Naive thymus-derived CD4-positive, alpha-beta T cell (primary cell): ENCODE measurements at regions of chr1 and their contacts with region 1.

Region 1: DNA sequence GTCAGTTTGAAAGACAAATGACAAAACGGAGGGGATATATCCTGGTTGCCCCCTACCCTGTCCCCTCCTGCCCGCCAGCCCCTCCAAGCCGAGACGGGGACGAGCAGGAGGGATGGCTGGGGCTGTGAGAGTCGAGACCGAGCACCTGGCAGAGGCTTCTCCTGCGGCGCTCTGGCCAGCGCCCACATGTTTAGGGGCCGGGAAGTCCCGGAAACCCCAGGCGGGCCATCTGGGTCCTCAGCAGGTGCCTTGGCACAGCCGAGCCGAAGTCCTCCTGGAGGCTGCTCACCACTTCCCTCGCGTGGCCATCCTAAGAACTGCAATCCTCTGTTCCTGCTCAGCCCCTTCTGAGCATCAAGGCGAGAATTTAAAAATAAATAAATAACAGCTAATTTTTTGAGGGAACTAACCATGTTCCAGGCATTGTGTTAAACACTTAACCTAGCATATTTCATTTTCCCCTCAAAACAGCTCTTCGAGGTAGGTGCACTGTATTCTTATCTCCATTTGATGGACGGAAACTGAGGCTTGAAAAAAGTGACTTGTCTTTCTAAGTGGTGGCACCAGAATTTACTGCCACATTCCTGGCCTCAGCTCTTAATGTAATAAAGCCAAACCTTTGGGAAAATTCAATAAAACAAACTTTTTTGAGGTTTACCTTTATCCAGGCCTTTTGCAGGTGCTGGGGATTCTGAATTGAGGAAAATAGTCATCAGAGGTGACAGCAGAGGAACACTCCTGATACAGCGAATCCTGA is 3.5 kb upstream of the RIMS3 start:
- DNase-seq: peak; percentile 58 to 84 (median 73)
- ATAC-seq: peak; percentile 82
- H3K4me3 ChIP-seq: peak overlapping the region; percentile 35
- H3K4me3 Mint-ChIP-seq: peak overlapping the region in 8 of 10 donors; percentile 36 to 68 (median 54)
- H3K27ac ChIP-seq: no peak overlapping the region
- H3K27ac Mint-ChIP-seq: no peak overlapping the region
- H3K4me1 ChIP-seq: peaks cover 9 to 13% of the 10 kb centered on the region in 2 donors
- H3K4me1 Mint-ChIP-seq: peaks cover 8 to 22% (median 17%) of the 10 kb centered on the region in 7 donors
- H3K27me3 ChIP-seq: no peaks in the 10 kb centered on the region
- H3K27me3 Mint-ChIP-seq: peaks cover 0 to 16% (median 0%) of the 10 kb centered on the region in 5 donors

Region 2: DNA sequence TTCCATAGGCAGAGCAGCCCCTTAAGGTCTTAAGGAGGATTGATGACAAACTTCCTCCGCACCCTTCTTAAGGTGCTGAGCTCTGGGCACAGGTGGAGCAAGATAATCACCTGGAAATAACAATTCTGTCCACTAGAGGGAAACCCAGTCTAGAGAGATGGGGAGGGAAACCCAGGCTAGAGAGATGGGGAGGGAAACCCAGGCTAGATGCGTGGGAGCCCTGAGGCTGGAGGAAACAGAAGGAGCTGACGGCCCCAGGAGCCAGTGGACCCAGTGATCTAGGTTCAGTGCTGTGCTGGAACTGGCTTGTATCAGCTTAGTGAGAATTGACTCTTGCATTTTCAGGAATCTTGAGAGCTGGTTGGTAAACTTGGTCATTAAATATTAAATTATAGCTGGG is 749.4 kb before region 1 on chr1:
- CTCF ChIA-PET with region 1: interaction called, 11 read pairs
- POLR2A ChIA-PET with region 1: no interaction called
- intact Hi-C with region 1: no loop called
- DNase-seq: peak in 8 of 9 donors; percentile 48 to 76 (median 67)
- ATAC-seq: peak; percentile 93
- H3K4me3 ChIP-seq: no peak overlapping the region
- H3K4me3 Mint-ChIP-seq: no peak overlapping the region
- H3K27ac ChIP-seq: no peak overlapping the region
- H3K27ac Mint-ChIP-seq: no peak overlapping the region
- H3K4me1 ChIP-seq: no peaks in the 10 kb centered on the region
- H3K4me1 Mint-ChIP-seq: peaks cover 0 to 4% (median 0%) of the 10 kb centered on the region in 7 donors
- H3K27me3 ChIP-seq: no peaks in the 10 kb centered on the region
- H3K27me3 Mint-ChIP-seq: peaks cover 0 to 8% (median 4%) of the 10 kb centered on the region in 5 donors

Region 3: DNA sequence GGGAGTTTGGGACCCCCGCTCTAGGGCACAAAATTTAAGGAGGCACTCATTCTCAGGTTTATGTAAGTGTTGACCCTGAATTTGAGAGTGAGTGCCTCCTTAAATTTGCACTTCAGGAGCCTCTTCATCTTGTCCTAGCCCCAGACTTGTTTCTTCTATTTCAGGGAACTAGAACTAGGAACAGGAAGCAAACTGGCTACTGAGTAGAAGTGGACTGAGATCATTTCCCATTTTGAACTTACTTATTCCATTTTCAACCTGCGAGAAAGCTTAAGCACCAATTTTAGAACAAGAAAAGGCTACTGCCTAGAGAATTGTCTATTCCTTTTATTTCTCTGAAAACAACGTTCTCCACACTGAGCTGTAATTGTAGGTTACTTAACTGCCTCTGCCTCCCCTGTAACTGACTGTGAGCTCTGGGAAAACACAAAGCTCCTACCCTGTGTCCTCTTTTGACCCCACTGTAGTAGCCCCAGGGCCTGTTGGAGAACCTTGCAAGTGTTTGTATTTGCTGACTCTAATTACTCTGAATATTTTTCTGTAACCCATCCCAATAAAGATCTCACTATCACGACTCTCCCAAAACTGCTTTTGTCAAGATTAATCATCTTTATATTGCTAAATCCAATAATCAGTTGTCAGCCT is 574.4 kb before region 1 on chr1:
- CTCF ChIA-PET with region 1: no interaction called
- POLR2A ChIA-PET with region 1: no interaction called
- intact Hi-C with region 1: no loop called
- DNase-seq: no peak
- ATAC-seq: no peak
- H3K4me3 ChIP-seq: no peak overlapping the region
- H3K4me3 Mint-ChIP-seq: no peak overlapping the region
- H3K27ac ChIP-seq: no peak overlapping the region
- H3K27ac Mint-ChIP-seq: peak overlapping the region in 7 of 9 donors; percentile 6 to 78 (median 43)
- H3K4me1 ChIP-seq: peaks cover 13 to 14% of the 10 kb centered on the region in 2 donors
- H3K4me1 Mint-ChIP-seq: peaks cover 26 to 47% (median 34%) of the 10 kb centered on the region in 7 donors
- H3K27me3 ChIP-seq: no peaks in the 10 kb centered on the region
- H3K27me3 Mint-ChIP-seq: peaks cover 0 to 4% (median 0%) of the 10 kb centered on the region in 5 donors

Region 4: DNA sequence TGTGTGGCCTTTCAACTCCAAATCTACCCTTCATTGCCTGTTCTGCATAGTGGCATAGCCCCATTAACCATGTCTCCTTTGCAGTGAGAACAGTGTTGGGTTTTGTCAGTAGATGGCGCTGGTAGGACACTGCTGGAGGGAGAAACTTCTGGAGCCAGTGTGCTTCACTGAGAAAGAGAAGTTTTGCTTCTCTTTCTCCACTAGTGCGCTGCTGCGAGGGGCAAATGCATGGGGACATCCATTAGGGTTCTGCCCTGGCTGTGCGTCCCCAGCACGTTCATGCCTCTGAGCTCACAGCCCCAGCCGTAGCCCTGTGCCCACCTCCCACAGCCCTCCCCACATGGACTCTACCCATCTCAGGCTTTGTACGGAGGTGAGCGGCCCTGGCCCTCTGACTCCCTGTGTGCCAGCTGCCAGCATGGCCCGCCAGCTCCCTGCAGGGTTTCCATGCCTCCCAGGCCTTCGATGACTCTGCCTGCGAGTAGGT is 56.6 kb before region 1 on chr1:
- CTCF ChIA-PET with region 1: interaction called, 3 read pairs
- POLR2A ChIA-PET with region 1: no interaction called
- intact Hi-C with region 1: loop called (anchors 1 kb)
- DNase-seq: peak in 8 of 9 donors; percentile 45 to 75 (median 68)
- ATAC-seq: peak; percentile 94
- H3K4me3 ChIP-seq: no peak overlapping the region
- H3K4me3 Mint-ChIP-seq: no peak overlapping the region
- H3K27ac ChIP-seq: no peak overlapping the region
- H3K27ac Mint-ChIP-seq: no peak overlapping the region
- H3K4me1 ChIP-seq: no peaks in the 10 kb centered on the region
- H3K4me1 Mint-ChIP-seq: peaks cover 0 to 4% (median 0%) of the 10 kb centered on the region in 7 donors
- H3K27me3 ChIP-seq: no peaks in the 10 kb centered on the region
- H3K27me3 Mint-ChIP-seq: peaks cover 0 to 7% (median 0%) of the 10 kb centered on the region in 5 donors

Region 5: GRCh38 chr1:40630488-40631381 is 38.2 kb before region 1 on chr1:
- CTCF ChIA-PET with region 1: no interaction called
- POLR2A ChIA-PET with region 1: no interaction called
- intact Hi-C with region 1: loop called (anchors 1 to 5 kb)
- DNase-seq: no peak
- ATAC-seq: no peak
- H3K4me3 ChIP-seq: no peak overlapping the region
- H3K4me3 Mint-ChIP-seq: no peak overlapping the region
- H3K27ac ChIP-seq: no peak overlapping the region
- H3K27ac Mint-ChIP-seq: peak overlapping the region in 1 of 9 donors; percentile 62
- H3K4me1 ChIP-seq: peaks cover 0 to 21% of the 10 kb centered on the region in 2 donors
- H3K4me1 Mint-ChIP-seq: peaks cover 0 to 30% (median 9%) of the 10 kb centered on the region in 7 donors
- H3K27me3 ChIP-seq: no peaks in the 10 kb centered on the region
- H3K27me3 Mint-ChIP-seq: no peaks in the 10 kb centered on the region

Region 6: DNA sequence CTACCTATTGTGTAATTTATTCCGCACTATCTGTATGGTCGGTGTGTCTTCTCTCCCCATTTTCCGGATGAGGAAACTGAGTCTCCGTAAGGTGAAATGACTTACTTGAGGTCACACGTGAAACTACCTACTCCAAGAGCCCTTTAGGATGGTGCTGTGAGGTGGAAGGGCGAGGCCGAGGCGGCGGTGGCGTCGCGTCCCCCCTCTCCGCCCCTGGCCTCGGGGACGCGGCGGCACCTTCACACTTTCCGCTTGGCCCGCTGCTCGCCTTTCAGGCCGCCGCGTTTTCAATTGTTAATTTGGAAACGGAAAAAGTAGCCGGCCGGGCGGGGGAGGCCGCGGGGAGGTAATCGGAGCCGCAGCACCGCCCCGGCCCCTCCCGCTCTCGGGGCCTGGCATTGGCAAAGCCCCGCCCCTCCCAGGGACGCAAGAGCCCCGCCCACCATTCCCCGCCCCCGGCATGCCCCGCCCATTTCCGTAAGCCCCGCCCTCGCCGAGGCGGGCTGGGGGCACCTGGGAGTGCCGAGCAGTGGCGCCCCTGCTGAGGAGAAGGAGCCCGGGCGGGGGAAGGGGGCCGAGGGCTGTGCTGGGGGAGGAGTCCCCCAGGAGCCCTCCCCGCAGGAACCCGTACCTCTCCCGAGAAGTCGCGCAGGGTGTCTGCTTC is 133.3 kb after region 1 on chr1:
- CTCF ChIA-PET with region 1: no interaction called
- POLR2A ChIA-PET with region 1: no interaction called
- intact Hi-C with region 1: loop called in 1 of 2 experiments (anchors 1 kb)
- DNase-seq: peak; percentile 76 to 87 (median 84)
- ATAC-seq: peak; percentile 98
- H3K4me3 ChIP-seq: peak overlapping the region; percentile 65
- H3K4me3 Mint-ChIP-seq: peak overlapping the region; percentile 70 to 89 (median 78)
- H3K27ac ChIP-seq: peak overlapping the region; percentile 77
- H3K27ac Mint-ChIP-seq: peak overlapping the region; percentile 69 to 92 (median 87)
- H3K4me1 ChIP-seq: peaks cover 16 to 21% of the 10 kb centered on the region in 2 donors
- H3K4me1 Mint-ChIP-seq: peaks cover 15 to 41% (median 31%) of the 10 kb centered on the region in 7 donors
- H3K27me3 ChIP-seq: no peaks in the 10 kb centered on the region
- H3K27me3 Mint-ChIP-seq: peaks cover 0 to 2% (median 0%) of the 10 kb centered on the region in 5 donors